CD8-positive, alpha-beta T cell (primary cell): ENCODE measurements at regions of chr20 and their contacts with region 1.

Region 1: GRCh38 chr20:5146871-5147592 is 20.2 kb downstream of the CDS2 start:
- DNase-seq: no peak
- ATAC-seq: no peak
- H3K4me3 ChIP-seq: no peak overlapping the region
- H3K4me3 Mint-ChIP-seq: no peak overlapping the region
- H3K27ac ChIP-seq: no peak overlapping the region
- H3K27ac Mint-ChIP-seq: no peak overlapping the region
- H3K4me1 ChIP-seq: peaks cover 20% of the 10 kb centered on the region
- H3K4me1 Mint-ChIP-seq: peaks cover 66% of the 10 kb centered on the region
- H3K27me3 ChIP-seq: no peaks in the 10 kb centered on the region
- H3K27me3 Mint-ChIP-seq: no peaks in the 10 kb centered on the region
- CTCF ChIP-seq: no peak

Region 2: DNA sequence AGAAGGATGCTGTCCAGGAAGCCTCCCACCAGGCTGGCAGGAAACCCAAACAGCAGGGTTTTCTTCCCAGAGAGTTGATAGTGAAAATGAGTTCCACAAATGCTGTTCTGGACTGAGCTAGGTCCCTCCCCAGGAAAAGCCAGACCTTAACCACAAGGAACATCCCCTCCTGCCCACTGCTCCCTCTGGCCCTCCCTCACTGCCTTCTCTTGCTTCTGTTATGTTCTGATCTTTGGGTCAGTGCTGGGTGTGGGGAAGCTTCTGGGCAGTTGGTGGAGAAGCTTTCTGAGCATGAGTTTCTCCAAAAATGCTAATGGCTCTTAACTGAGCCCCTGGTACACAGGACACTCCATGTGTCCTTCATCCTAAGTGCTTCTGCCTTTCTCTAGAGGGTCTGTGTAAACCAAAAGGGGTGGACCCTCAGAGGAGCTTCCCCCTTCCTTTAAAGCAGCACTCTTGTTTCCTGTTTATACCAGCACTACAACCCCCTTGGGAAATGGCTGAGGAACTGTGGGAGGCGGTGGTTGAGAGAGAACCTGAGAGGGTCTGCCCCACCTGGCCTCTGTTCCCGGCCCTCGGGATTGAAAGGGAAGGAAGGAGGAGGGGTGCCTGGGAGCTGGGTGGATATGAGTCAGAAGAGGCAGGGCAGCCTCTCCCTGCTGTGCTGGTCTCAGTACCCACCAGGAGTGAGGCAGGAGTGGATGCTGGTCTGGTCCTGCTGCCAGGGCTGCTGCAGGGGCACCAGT is 21.8 kb after region 1 on chr20:
- CTCF ChIA-PET with region 1: no interaction called
- POLR2A ChIA-PET with region 1: no interaction called
- intact Hi-C with region 1: no loop called
- DNase-seq: no peak
- ATAC-seq: no peak
- H3K4me3 ChIP-seq: no peak overlapping the region
- H3K4me3 Mint-ChIP-seq: peak overlapping the region; percentile 62
- H3K27ac ChIP-seq: peak overlapping the region; percentile 19 to 24
- H3K27ac Mint-ChIP-seq: peak overlapping the region; percentile 74
- H3K4me1 ChIP-seq: peaks cover 28% of the 10 kb centered on the region
- H3K4me1 Mint-ChIP-seq: peaks cover 79% of the 10 kb centered on the region
- H3K27me3 ChIP-seq: no peaks in the 10 kb centered on the region
- H3K27me3 Mint-ChIP-seq: no peaks in the 10 kb centered on the region
- CTCF ChIP-seq: no peak

Region 3: DNA sequence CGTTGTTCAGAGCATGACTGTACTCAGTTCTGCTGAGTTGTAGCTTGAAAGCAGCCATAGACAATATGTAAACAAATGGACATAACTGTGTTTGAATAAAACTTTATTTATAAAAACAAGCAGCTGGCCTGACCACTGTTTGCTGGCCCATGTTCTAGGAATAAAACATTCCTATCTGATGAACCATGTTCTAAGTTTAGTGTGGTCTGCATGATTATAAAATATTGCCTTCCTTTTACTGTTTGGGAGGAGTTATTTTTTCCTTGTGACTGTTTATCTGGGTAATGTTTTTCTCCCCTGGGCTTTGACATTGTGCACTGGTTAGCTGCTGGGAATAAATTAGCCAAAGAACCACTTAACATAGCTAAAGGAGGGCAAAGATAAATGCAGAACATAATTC is 34.9 kb after region 1 on chr20:
- CTCF ChIA-PET with region 1: no interaction called
- POLR2A ChIA-PET with region 1: no interaction called
- intact Hi-C with region 1: loop called in 1 of 2 experiments (anchors 5 kb)
- DNase-seq: no peak
- ATAC-seq: no peak
- H3K4me3 ChIP-seq: no peak overlapping the region
- H3K4me3 Mint-ChIP-seq: no peak overlapping the region
- H3K27ac ChIP-seq: no peak overlapping the region
- H3K27ac Mint-ChIP-seq: no peak overlapping the region
- H3K4me1 ChIP-seq: no peaks in the 10 kb centered on the region
- H3K4me1 Mint-ChIP-seq: no peaks in the 10 kb centered on the region
- H3K27me3 ChIP-seq: no peaks in the 10 kb centered on the region
- H3K27me3 Mint-ChIP-seq: no peaks in the 10 kb centered on the region
- CTCF ChIP-seq: no peak